Posterior vena cava (tissue), 2 donors: ENCODE measurements at regions of chr19 and their contacts with region 1.

Region 1: GRCh38 chr19:12974301-12975220 is 5.2 kb downstream of the DAND5 start:
- DNase-seq: no peak

Region 2: GRCh38 chr19:13002166-13002898 is 27.8 kb after region 1 on chr19:
- intact Hi-C with region 1: no loop called
- DNase-seq: no peak

Region 3: GRCh38 chr19:13644645-13645044 is 670.1 kb after region 1 on chr19:
- intact Hi-C with region 1: loop called in 1 of 2 experiments (anchors 5 kb)
- DNase-seq: no peak

Region 4: GRCh38 chr19:14089662-14090508 is 1115.3 kb after region 1 on chr19:
- intact Hi-C with region 1: loop called in 1 of 2 experiments (anchors 5 kb)
- DNase-seq: peak; percentile 83